Mammary epithelial cell (primary cell): ENCODE measurements at regions of chr5 and their contacts with region 1.

Region 1: GRCh38 chr5:112968411-112969106 is 8.0 kb upstream of the DCP2 start:
- DNase-seq: no peak
- H3K4me3 ChIP-seq: no peak overlapping the region
- H3K27ac ChIP-seq: no peak overlapping the region
- H3K4me1 ChIP-seq: peaks cover 5% of the 10 kb centered on the region
- H3K27me3 ChIP-seq: no peaks in the 10 kb centered on the region
- CTCF ChIP-seq: no peak

Region 2: GRCh38 chr5:112921833-112922817 is 46.4 kb before region 1 on chr5 and contains the start of gene REEP5:
- CTCF ChIA-PET with region 1: no interaction called
- dilution Hi-C with region 1: no loop called
- in situ Hi-C with region 1: no loop called
- intact Hi-C with region 1: loop called (anchors 1 kb)
- DNase-seq: peak; percentile 73
- H3K4me3 ChIP-seq: peak within 1 kb of the TSS; percentile 77 to 100 (median 97)
- H3K27ac ChIP-seq: peak within 1 kb of the TSS; percentile 71
- H3K4me1 ChIP-seq: peaks cover 14% of the 10 kb centered on the region
- H3K27me3 ChIP-seq: no peaks in the 10 kb centered on the region
- CTCF ChIP-seq: peak; percentile 33 to 61
- total RNA-seq, gene REEP5: 60.7 to 102 TPM